PC-9 (cell line): ENCODE measurements at regions of chr9 and their contacts with region 1.

Region 1: GRCh38 chr9:128142596-128142995 is 6.7 kb upstream of the LCN2 start:
- DNase-seq: no peak
- H3K4me3 ChIP-seq: no peak overlapping the region
- H3K27ac ChIP-seq: peak overlapping the region; percentile 87
- H3K4me1 ChIP-seq: peaks cover 68% of the 10 kb centered on the region
- H3K27me3 ChIP-seq: no peaks in the 10 kb centered on the region
- CTCF ChIP-seq: no peak

Region 2: DNA sequence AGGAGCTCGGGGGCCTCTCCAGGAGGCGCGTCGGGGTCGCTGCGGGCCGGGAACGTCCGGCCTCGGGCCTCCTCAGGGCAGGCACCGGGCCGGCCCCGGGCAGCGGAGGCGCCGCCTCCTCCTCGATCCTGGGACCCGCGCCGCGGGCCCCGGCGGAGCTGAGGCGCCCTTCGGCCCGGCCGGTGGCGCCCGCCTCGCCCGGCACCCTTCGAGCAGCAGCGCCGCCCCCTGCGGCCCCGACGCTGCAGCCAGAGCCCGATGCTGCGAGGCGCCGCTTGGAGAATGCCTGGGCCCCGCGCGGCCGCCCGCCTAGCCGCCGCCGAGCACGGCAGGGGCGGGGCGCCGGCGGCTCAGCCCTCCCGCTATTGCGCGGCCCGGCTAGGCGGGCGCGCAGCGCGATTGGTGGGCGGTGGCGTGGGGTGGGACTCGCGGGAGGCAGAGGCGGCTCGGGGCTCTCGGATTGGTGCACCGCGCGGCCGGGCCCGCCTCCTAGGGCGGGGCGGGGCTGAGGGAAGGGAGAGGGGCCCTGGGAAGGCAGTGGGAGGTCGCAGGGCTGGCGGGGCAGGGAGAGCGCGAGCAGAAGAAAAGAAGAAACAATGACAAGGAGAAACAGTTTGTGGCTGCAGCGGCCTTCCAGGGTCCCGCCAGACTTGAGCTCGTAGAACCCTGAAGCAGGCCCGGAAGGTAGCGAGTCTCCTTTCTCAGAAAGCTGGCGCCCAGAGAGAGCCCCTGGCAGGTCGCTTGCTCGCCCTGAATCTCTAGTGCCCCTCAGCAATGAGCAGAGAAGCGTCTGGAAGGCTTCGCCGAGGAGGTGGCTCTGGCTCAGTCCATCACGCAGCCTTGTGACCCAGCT is 161.7 kb before region 1 on chr9 and contains the start of gene EEIG1:
- CTCF ChIA-PET with region 1: no interaction called
- POLR2A ChIA-PET with region 1: no interaction called
- intact Hi-C with region 1: no loop called
- DNase-seq: peak; percentile 73 to 99
- H3K4me3 ChIP-seq: peak within 1 kb of the TSS; percentile 82
- H3K27ac ChIP-seq: peak within 1 kb of the TSS; percentile 39
- H3K4me1 ChIP-seq: peaks cover 45% of the 10 kb centered on the region
- H3K27me3 ChIP-seq: no peaks in the 10 kb centered on the region
- CTCF ChIP-seq: no peak
- total RNA-seq, gene EEIG1: 176 and 208 TPM in 2 replicates

Region 3: GRCh38 chr9:128159784-128160602 is 17.4 kb after region 1 on chr9 and contains the start of gene BBLN:
- CTCF ChIA-PET with region 1: no interaction called
- POLR2A ChIA-PET with region 1: interaction called, 15 read pairs
- intact Hi-C with region 1: no loop called
- DNase-seq: peak; percentile 75 to 99
- H3K4me3 ChIP-seq: peak within 1 kb of the TSS; percentile 90
- H3K27ac ChIP-seq: peak within 1 kb of the TSS; percentile 69
- H3K4me1 ChIP-seq: 0 out of 2 replicates have a peak, but pooled peaks cover 9% of the 10 kb centered on the region
- H3K27me3 ChIP-seq: no peaks in the 10 kb centered on the region
- CTCF ChIP-seq: no peak
- total RNA-seq, gene BBLN: 154 and 213 TPM in 2 replicates

Region 4: GRCh38 chr9:129068990-129069861 is 926.6 kb after region 1 on chr9:
- CTCF ChIA-PET with region 1: no interaction called
- POLR2A ChIA-PET with region 1: no interaction called
- intact Hi-C with region 1: no loop called
- DNase-seq: peak in 1 of 2 experiments; percentile 33
- H3K4me3 ChIP-seq: no peak overlapping the region
- H3K27ac ChIP-seq: no peak overlapping the region
- H3K4me1 ChIP-seq: no peaks in the 10 kb centered on the region
- H3K27me3 ChIP-seq: no peaks in the 10 kb centered on the region
- CTCF ChIP-seq: no peak